ENCODE measurements at regions of chrX and their contacts with region 1.

Region 1: DNA sequence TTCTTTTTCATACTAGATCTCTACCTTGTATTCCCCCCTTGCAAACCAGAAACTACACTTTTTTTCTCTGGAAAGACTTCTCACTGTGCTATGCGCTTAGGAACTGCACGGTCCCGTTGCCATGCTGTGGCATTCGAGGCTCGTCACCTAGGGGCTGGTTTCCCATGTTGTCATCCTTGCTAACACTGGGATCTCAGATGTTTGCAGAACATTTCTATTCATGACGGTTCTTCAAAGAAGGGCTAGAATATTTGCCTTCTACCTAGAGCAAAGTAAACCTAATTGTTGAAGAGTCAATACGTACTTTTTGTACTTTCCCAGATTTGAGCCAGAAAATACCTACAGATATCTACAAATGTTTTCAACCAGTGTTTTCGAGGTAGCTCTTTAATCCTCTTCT is 41.0 kb downstream of the RS1 start:
- DNase-seq: no peak
- ATAC-seq: no peak
- H3K4me3 ChIP-seq: no peak overlapping the region
- H3K27ac ChIP-seq: no peak overlapping the region
- H3K4me1 ChIP-seq: no peaks in the 10 kb centered on the region
- H3K27me3 ChIP-seq: no peaks in the 10 kb centered on the region
- CTCF ChIP-seq: no peak
- POLR2A ChIP-seq: no peak
- RAD21 ChIP-seq: no peak

Region 2: GRCh38 chrX:17826609-17827496 is 804.1 kb before region 1 on chrX:
- CTCF ChIA-PET with region 1: no interaction called
- POLR2A ChIA-PET with region 1: no interaction called
- dilution Hi-C with region 1: no loop called
- in situ Hi-C with region 1: no loop called
- intact Hi-C with region 1: no loop called
- DNase-seq: no peak
- ATAC-seq: no peak
- H3K4me3 ChIP-seq: no peak overlapping the region
- H3K27ac ChIP-seq: no peak overlapping the region
- H3K4me1 ChIP-seq: no peaks in the 10 kb centered on the region
- H3K27me3 ChIP-seq: no peaks in the 10 kb centered on the region
- CTCF ChIP-seq: no peak
- POLR2A ChIP-seq: no peak
- RAD21 ChIP-seq: no peak

Region 3: GRCh38 chrX:18617407-18617750 is 13.6 kb before region 1 on chrX:
- CTCF ChIA-PET with region 1: no interaction called
- POLR2A ChIA-PET with region 1: interaction called, 15 read pairs
- dilution Hi-C with region 1: no loop called
- in situ Hi-C with region 1: no loop called
- intact Hi-C with region 1: no loop called
- DNase-seq: peak; percentile 76
- ATAC-seq: peak; percentile 75
- H3K4me3 ChIP-seq: no peak overlapping the region
- H3K27ac ChIP-seq: no peak overlapping the region
- H3K4me1 ChIP-seq: peaks cover 2% of the 10 kb centered on the region
- H3K27me3 ChIP-seq: no peaks in the 10 kb centered on the region
- CTCF ChIP-seq: no peak
- POLR2A ChIP-seq: no peak
- RAD21 ChIP-seq: no peak

Region 4: DNA sequence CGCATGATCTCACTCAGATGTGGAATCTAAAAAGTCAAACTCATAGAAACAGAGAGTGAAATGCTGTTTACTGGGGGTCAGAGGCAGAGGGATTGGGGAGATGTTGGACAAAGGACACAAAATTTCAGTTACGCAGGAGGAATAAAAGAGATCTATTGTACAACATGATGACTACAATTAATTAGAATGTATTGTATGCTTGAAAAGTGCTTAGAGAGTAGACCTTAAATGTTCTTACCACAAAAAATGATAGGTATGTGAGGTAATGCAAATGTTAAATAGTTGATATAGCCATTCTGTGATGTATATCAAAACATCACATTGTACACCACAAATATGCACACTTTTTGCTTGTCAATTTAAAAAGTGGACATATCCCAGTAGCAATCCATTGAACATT is 389.1 kb after region 1 on chrX:
- CTCF ChIA-PET with region 1: no interaction called
- POLR2A ChIA-PET with region 1: no interaction called
- dilution Hi-C with region 1: no loop called
- in situ Hi-C with region 1: no loop called
- intact Hi-C with region 1: no loop called
- DNase-seq: peak; percentile 9
- ATAC-seq: no peak
- H3K4me3 ChIP-seq: no peak overlapping the region
- H3K27ac ChIP-seq: no peak overlapping the region
- H3K4me1 ChIP-seq: no peaks in the 10 kb centered on the region
- H3K27me3 ChIP-seq: no peaks in the 10 kb centered on the region
- CTCF ChIP-seq: no peak
- POLR2A ChIP-seq: no peak
- RAD21 ChIP-seq: no peak

Region 5: DNA sequence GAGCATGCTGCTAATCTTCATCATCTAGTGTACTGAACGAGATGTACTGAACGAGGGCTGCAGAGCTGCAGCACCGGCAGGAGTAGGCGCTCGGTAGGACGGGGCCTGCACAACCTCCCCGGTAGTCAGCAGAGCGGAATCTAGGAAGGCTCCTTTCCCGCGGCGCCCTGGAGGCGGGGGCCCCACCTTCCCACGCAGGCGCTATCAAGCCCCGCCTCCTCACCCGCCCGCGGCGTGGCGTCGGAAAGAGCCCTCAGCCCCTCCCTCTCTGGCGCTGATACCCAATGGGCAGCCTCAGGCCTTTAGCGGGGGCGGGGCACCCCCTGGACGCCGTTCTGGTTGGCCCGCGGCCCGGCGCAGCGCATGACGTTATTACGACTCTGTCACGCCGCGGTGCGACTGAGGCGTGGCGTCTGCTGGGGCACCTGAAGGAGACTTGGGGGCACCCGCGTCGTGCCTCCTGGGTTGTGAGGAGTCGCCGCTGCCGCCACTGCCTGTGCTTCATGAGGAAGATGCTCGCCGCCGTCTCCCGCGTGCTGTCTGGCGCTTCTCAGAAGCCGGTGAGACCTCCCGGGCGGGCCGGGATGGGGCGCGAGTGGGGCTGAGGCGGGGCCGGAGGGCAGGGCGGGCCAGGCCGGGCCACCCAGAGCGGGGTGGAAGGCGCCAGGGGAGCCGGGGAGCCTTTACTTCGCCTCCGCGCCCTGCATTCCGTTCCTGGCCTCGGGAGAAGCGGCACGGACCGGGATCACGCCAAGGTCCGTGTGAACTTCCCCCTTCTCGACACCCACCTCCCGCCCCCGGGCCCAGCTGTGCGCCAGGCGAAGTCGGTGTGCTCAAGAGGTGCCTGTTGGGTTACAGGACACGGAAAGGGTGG is 712.8 kb after region 1 on chrX and contains the start of gene PDHA1:
- CTCF ChIA-PET with region 1: no interaction called
- POLR2A ChIA-PET with region 1: no interaction called
- dilution Hi-C with region 1: no loop called
- in situ Hi-C with region 1: no loop called
- intact Hi-C with region 1: no loop called
- DNase-seq: peak; percentile 87
- ATAC-seq: peak; percentile 99
- H3K4me3 ChIP-seq: peak within 1 kb of the TSS; percentile 91
- H3K27ac ChIP-seq: peak within 1 kb of the TSS; percentile 93
- H3K4me1 ChIP-seq: peaks cover 2% of the 10 kb centered on the region; the same call in 1 of the 2 replicates
- H3K27me3 ChIP-seq: no peaks in the 10 kb centered on the region
- CTCF ChIP-seq: no peak
- POLR2A ChIP-seq: peak; percentile 71
- RAD21 ChIP-seq: no peak
- total RNA-seq, gene PDHA1: 53.9 and 86.9 TPM in 2 replicates

Measured in IMR-90 (cell line).